ENCODE measurements at regions of chr4 and their contacts with region 1.

Region 1: GRCh38 chr4:81405894-81406401 is 65.8 kb downstream of the RASGEF1B start:
- DNase-seq: peak; percentile 85
- H3K4me3 ChIP-seq: no peak overlapping the region
- H3K27ac ChIP-seq: no peak overlapping the region
- H3K4me1 ChIP-seq: no peaks in the 10 kb centered on the region
- CTCF ChIP-seq: peak; percentile 100

Region 2: DNA sequence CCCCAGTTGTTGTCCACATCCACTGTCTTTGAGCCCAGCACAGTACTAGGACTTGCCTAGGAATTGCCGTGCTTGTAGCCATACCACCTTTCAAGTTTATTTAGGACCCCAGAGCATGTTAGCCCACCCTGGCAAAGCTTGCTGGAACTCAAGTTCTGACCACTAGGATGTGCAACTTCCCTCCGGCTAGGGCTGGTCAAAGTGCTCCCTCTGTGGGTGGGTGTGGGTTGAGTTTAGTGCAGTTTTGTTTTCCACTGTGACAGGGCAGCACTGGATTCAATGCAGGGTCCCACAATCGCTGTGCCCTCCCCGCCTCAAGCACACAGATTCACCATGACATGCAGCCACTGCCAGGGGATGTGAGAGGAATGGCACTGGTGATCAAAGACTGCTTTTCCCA is 30.2 kb before region 1 on chr4:
- CTCF ChIA-PET with region 1: no interaction called
- POLR2A ChIA-PET with region 1: no interaction called
- intact Hi-C with region 1: no loop called
- DNase-seq: peak; percentile 11
- H3K4me3 ChIP-seq: no peak overlapping the region
- H3K27ac ChIP-seq: no peak overlapping the region
- H3K4me1 ChIP-seq: no peaks in the 10 kb centered on the region
- CTCF ChIP-seq: peak; percentile 57

Region 3: GRCh38 chr4:81460191-81460701 is 54.3 kb after region 1 on chr4:
- CTCF ChIA-PET with region 1: no interaction called
- POLR2A ChIA-PET with region 1: no interaction called
- intact Hi-C with region 1: no loop called
- DNase-seq: no peak
- H3K4me3 ChIP-seq: no peak overlapping the region
- H3K27ac ChIP-seq: no peak overlapping the region
- H3K4me1 ChIP-seq: no peaks in the 10 kb centered on the region
- CTCF ChIP-seq: no peak

Region 4: GRCh38 chr4:81724925-81725329 is 319.0 kb after region 1 on chr4:
- CTCF ChIA-PET with region 1: no interaction called
- POLR2A ChIA-PET with region 1: no interaction called
- intact Hi-C with region 1: loop called (anchors 5 kb)
- DNase-seq: peak; percentile 55
- H3K4me3 ChIP-seq: no peak overlapping the region
- H3K27ac ChIP-seq: no peak overlapping the region
- H3K4me1 ChIP-seq: peaks cover 24% of the 10 kb centered on the region
- CTCF ChIP-seq: peak; percentile 62

Region 5: DNA sequence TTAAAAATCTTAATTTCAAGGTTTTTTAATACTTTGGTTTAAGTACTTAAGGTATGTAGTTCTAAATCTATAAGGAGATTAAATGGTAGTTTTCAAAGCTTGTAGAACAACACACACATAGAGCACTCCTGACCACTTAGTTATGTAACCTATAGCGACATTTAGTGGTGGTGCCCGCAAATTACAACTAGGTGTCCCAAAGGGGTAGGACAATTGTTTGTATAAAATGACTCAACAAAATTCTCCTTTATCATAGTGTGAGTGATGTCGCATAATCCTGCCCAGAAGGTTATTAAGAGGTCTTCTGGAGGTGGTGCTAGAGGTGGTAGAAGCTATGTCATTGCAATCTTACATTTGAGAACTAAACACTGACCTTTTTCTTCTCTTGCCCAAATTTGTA is 438.8 kb after region 1 on chr4:
- CTCF ChIA-PET with region 1: no interaction called
- POLR2A ChIA-PET with region 1: no interaction called
- intact Hi-C with region 1: loop called (anchors 1 kb)
- DNase-seq: peak; percentile 86
- H3K4me3 ChIP-seq: no peak overlapping the region
- H3K27ac ChIP-seq: no peak overlapping the region
- H3K4me1 ChIP-seq: peaks cover 4% of the 10 kb centered on the region
- CTCF ChIP-seq: peak; percentile 96

Region 6: DNA sequence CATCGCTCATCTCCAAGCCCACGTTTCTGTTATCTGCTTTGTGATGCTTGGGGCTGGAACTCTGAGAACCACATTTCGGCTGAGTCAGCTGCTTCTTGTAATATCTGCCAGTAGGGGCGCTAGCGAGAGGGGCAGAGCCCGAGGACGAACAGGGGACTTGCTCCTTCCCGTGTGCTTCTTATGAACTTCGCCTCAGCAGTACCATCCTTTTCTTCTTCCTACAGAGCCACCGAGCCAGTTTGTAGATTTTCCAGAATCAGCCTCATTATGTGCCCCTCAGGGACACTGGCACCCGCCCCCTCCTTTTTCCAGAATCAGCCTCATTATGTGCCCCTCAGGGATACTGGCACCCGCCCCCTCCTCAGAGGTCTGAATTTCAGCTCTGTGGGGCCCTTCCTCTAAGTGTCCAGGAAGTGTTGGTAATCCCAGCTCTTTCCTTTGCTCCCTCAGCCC is 507.5 kb after region 1 on chr4:
- CTCF ChIA-PET with region 1: no interaction called
- POLR2A ChIA-PET with region 1: no interaction called
- intact Hi-C with region 1: loop called (anchors 5 kb)
- DNase-seq: peak; percentile 83
- H3K4me3 ChIP-seq: no peak overlapping the region
- H3K27ac ChIP-seq: no peak overlapping the region
- H3K4me1 ChIP-seq: no peaks in the 10 kb centered on the region
- CTCF ChIP-seq: peak; percentile 93

Region 7: DNA sequence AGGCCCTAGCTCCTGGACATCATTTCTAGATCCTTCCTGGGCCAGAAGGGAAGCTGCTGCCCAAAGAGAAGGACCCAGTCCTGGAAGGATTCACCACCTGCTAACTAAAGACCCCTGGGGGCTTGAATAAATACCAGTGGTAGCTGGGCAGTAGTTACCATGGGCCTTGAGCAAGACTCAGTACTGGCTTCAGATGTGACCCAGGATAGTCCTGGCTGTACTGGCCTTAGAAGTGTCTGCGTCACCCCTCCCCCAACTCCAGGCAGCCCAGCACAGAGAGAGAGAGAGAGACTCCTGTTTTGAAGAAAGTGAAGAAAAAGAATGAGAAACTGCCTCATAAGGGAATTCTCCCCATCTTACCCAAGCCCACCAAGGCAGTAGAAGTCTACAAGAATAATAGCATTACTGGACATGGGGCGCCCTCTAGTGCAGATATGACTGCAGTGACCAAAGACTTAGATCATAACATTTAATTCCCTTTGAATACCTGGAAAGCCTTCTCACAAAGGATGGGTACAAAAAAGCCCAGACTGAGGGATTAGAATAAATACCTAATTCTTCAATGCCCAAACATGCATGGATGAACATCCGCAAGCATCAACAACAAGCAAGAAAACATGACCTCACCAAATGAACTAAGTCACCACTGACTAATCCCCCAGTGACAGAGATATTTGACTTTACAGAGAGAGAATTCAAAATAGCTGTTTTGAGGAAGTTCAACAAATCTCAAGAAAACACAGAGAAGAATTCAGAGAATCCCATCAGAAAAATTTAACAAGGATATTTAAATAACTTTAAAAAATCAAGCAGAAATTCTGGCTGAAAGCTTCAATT is 796.1 kb after region 1 on chr4:
- CTCF ChIA-PET with region 1: no interaction called
- POLR2A ChIA-PET with region 1: no interaction called
- intact Hi-C with region 1: loop called (anchors 1 kb)
- DNase-seq: peak; percentile 77
- H3K4me3 ChIP-seq: no peak overlapping the region
- H3K27ac ChIP-seq: no peak overlapping the region
- H3K4me1 ChIP-seq: no peaks in the 10 kb centered on the region
- CTCF ChIP-seq: peak; percentile 98

Region 8: GRCh38 chr4:82268050-82268825 is 862.3 kb after region 1 on chr4:
- CTCF ChIA-PET with region 1: no interaction called
- POLR2A ChIA-PET with region 1: no interaction called
- intact Hi-C with region 1: loop called (anchors 2 kb)
- DNase-seq: peak; percentile 66
- H3K4me3 ChIP-seq: no peak overlapping the region
- H3K27ac ChIP-seq: no peak overlapping the region
- H3K4me1 ChIP-seq: peaks cover 18% of the 10 kb centered on the region
- CTCF ChIP-seq: peak; percentile 94

Measured in OCI-LY7 (cell line).